Mammary epithelial cell (primary cell): ENCODE measurements at regions of chr14 and their contacts with region 1.

Region 1: DNA sequence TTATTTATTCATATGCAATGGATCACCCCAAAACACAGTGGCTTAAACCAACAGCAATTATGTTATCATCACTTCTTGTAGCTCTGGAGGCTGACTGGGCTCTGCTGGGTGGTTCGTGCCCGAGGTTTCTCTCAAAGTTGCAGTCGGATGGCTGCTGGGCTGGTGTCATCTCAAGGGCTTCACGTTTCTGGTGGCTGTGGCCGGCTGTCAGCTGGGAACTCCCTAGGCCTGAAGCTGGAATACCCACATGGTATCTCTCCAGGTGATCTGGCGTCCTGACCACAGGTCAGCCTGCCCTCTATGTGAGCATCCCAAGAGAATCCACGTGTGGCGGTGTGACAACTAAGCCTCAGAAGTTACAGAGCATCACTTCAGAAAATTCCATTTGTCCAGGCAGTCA is 12.0 kb downstream of the DIO3 start:
- DNase-seq: no peak
- H3K4me3 ChIP-seq: no peak overlapping the region
- H3K27ac ChIP-seq: no peak overlapping the region
- H3K4me1 ChIP-seq: no peaks in the 10 kb centered on the region
- H3K27me3 ChIP-seq: no peaks in the 10 kb centered on the region
- CTCF ChIP-seq: no peak

Region 2: GRCh38 chr14:101654051-101654450 is 80.7 kb after region 1 on chr14:
- CTCF ChIA-PET with region 1: no interaction called
- dilution Hi-C with region 1: loop called (anchors 5 kb)
- in situ Hi-C with region 1: no loop called
- intact Hi-C with region 1: no loop called
- DNase-seq: peak; percentile 20
- H3K4me3 ChIP-seq: no peak overlapping the region
- H3K27ac ChIP-seq: no peak overlapping the region
- H3K4me1 ChIP-seq: no peaks in the 10 kb centered on the region
- H3K27me3 ChIP-seq: no peaks in the 10 kb centered on the region
- CTCF ChIP-seq: no peak

Region 3: GRCh38 chr14:101731187-101732080 is 158.1 kb after region 1 on chr14:
- CTCF ChIA-PET with region 1: no interaction called
- dilution Hi-C with region 1: no loop called
- in situ Hi-C with region 1: no loop called
- intact Hi-C with region 1: no loop called
- DNase-seq: peak; percentile 95
- H3K4me3 ChIP-seq: peak overlapping the region in 1 of 3 experiments; percentile 18
- H3K27ac ChIP-seq: peak overlapping the region; percentile 91
- H3K4me1 ChIP-seq: peaks cover 37% of the 10 kb centered on the region
- H3K27me3 ChIP-seq: no peaks in the 10 kb centered on the region
- CTCF ChIP-seq: peak in 1 of 2 donors; percentile 6

Region 4: DNA sequence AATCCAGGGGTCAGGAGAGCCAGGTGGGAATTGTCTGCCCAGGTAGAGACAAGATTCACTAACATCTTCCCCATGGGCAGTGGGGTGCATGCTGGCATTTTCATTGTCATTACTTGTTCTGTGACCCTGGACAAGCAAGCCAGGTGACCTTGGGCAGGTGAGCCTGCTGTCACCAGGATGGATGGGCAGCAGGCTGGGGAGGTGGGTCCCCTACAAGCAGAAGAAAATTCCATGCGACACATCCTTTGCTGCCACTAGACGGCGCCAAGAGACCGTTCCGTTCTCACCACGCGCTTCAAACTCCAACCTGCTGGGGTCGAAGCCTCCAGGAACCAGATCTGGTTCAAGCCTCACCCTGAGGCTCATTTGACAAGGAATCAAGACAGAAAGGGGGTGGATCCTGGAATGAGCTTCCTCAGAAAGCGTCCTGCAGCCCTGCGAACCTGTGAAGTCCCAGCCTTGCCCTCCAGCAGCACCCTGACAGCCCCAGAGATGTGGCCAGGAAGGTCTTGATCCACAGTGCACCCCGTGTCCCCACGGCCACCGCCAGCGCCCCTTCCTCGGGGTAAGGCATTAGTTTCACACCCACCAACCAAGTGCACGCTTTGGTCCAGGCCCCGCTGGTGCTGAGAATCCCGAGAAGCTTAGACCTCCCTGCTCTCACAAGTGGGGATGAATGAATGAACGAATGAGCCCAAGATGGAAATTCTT is 387.8 kb after region 1 on chr14:
- CTCF ChIA-PET with region 1: no interaction called
- dilution Hi-C with region 1: no loop called
- in situ Hi-C with region 1: no loop called
- intact Hi-C with region 1: no loop called
- DNase-seq: peak; percentile 60
- H3K4me3 ChIP-seq: no peak overlapping the region
- H3K27ac ChIP-seq: no peak overlapping the region
- H3K4me1 ChIP-seq: peaks cover 23% of the 10 kb centered on the region
- H3K27me3 ChIP-seq: no peaks in the 10 kb centered on the region
- CTCF ChIP-seq: peak; percentile 95 to 97